ENCODE measurements at regions of chr6 and their contacts with region 1.

Region 1: DNA sequence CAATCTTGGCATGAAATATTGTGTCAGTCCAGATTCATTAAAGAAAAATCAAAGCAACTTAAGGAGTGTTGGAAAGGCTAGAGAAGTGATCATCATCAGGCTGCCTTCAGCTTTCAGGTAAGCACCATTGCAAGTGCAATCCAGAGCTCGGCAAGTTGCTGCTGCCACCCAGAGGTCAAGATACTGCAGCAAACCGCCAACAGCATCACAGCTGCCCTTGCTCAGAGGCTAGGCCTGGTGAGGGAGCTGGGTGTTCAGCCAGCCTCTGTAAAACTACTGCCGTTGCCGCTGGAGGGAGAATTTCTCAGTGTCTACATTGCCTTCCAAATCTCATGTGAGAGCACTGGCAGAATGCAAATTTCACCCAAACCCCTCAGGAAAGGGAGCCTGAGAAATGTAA is 5.8 kb upstream of the SYNE1 start:
- DNase-seq: peak; percentile 38
- H3K27ac ChIP-seq: no peak overlapping the region
- CTCF ChIP-seq: peak; percentile 63

Region 2: DNA sequence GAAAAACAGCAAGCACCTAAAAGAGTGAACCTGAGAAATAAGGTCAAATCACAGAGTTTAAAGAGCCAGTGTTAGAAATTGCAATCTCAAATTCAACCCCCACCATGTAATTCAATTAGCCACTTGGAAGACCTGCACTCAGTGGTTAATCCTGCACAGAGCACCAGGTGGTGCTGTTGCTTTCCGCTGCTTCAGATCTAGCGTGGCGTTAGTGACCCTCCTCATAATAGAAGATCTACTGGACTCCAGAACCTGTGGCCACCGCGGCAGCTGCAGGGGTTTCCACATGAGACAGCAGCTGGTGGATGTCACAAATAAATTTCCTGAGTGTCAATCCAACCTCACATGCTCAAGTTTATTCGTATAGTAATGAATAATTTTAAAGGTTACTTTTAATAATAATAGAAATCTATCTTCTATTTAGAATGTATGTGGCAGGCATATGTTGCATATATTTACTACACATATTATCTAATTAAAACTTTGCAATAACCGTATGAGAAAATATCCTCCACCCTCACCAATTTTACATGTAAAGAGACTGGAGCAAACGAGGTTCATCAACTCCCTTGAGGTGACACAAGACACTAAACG is 90.3 kb before region 1 on chr6:
- CTCF ChIA-PET with region 1: interaction called, 33 read pairs
- POLR2A ChIA-PET with region 1: no interaction called
- DNase-seq: peak; percentile 64
- H3K27ac ChIP-seq: no peak overlapping the region
- CTCF ChIP-seq: peak; percentile 89

Region 3: DNA sequence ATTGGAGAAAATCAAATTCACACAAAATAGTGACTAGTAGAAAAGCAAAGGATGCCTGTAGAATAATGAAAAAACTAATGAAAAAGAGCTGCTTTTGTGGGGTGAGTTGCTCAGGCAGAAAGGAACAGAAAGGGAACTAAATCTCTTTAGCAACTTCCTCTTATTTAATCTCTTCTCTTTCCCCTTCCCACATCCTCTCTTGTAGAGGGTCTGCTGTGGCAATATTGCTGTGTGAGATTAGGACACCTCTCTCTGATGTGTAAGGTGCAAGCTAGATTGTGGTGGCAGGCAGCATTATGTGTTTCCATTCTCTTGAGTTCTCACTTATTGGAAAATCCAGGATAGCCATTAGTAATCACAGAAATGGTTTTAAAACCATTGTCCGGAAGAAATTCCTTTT is 55.5 kb before region 1 on chr6:
- CTCF ChIA-PET with region 1: no interaction called
- POLR2A ChIA-PET with region 1: no interaction called
- DNase-seq: no peak
- H3K27ac ChIP-seq: no peak overlapping the region
- CTCF ChIP-seq: no peak

Measured in RWPE1 (cell line).